Posterior vena cava (tissue), 2 donors: ENCODE measurements at regions of chr10 and their contacts with region 1.

Region 1: GRCh38 chr10:69629897-69630650 is at the start of gene FAM241B:
- DNase-seq: peak; percentile 89
- total RNA-seq, gene FAM241B: 2.2 to 3.1 TPM

Region 2: GRCh38 chr10:68816796-68817443 is 813.2 kb before region 1 on chr10:
- intact Hi-C with region 1: no loop called
- DNase-seq: no peak

Region 3: GRCh38 chr10:69515699-69516259 is 114.3 kb before region 1 on chr10:
- intact Hi-C with region 1: loop called (anchors 5 kb)
- DNase-seq: peak; percentile 88

Region 4: DNA sequence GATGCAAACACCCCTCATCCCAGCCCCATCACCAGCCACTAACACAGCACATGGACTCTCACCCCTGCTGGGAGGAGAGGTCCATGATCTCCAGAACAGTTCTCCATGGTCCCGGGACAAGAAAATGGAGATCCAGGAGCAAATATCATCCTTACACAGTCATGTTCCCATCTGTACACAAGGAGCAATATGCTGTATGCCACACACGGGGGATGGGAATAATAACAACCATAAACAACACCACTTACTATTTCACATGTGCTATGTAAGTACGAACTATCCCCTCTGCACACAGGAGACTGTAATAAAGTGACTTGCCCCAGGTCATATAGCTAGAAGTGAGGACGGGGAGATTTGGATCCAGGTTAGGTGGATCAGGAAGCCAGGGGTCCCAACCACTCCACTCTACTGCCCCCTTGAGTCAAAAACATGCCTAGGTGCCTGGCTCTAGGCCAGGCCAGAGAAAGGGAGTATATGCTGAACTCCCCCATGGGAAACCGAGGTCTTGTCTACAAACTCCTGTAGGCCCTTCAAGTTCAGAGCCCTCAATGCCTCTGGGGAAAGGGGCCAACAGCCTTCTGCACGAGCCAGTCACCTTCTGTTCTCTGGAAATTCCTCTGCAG is 718.3 kb after region 1 on chr10:
- intact Hi-C with region 1: loop called in 1 of 2 experiments (anchors 5 kb)
- DNase-seq: no peak